Head of caudate nucleus (tissue), 42 donors: ENCODE measurements at regions of chr17 and their contacts with region 1.

Region 1: GRCh38 chr17:27245230-27245696 is 48.7 kb upstream of the WSB1 start:
- DNase-seq: peak; percentile 72 to 93 (median 86)

Region 2: DNA sequence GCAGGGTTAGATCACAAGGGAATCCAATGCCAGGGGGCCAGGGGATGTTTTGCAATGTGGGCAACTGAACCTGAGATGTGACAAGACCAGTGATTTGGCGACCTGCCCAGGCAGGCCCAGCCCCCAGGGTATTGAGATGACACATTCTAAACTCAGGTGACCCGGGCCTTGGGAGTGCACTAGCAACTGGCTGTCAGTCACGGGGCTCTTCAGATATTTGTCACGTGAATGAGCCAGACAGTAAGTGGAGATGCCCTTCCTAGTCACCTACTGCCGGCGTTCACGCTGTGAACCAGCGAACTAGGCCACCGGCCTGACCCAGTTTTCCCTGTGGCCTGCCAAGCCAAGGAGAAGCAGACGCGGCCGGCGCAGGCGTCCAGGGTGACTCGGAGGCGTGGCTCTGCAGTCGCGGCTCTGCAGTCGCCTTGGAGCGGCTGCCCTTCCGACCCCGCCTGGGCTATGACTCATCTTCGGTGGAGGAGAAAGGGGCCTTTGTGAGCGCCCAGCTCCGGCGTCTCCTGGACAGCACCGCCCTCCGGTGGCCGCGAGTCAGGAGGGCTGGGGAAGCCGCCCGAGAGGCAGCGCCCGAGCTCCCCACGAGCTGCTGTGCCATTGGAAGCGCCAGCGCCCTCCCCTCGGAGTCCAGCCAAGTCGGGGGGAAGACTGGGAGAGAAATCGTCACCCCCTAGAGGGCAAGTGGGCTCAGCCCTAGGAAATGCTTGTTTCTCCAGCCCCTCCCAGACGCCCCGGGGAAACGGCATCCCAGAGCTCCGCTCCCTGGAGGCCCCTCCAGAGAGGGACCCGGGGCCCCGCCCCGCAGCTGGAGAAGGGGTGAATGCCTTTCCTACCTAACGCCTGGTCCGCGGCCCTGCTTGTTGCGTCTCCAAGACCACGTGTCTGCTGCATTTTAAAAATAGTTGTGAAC is 87.5 kb after region 1 on chr17:
- intact Hi-C with region 1: loop called (anchors 2 kb)
- DNase-seq: peak; percentile 94 to 99 (median 97)